Left lung (tissue), 14 donors: ENCODE measurements at regions of chr10 and their contacts with region 1.

Region 1: GRCh38 chr10:89563861-89564478 is 28.6 kb upstream of the SLC16A12 start:
- DNase-seq: peak in 2 of 4 donors; percentile 42 to 48
- ATAC-seq: peak; percentile 73
- H3K4me3 ChIP-seq: no peak overlapping the region
- H3K27ac ChIP-seq: no peak overlapping the region
- H3K4me1 ChIP-seq: no peaks in the 10 kb centered on the region
- H3K27me3 ChIP-seq: no peaks in the 10 kb centered on the region
- CTCF ChIP-seq: peak; percentile 56 to 69

Region 2: DNA sequence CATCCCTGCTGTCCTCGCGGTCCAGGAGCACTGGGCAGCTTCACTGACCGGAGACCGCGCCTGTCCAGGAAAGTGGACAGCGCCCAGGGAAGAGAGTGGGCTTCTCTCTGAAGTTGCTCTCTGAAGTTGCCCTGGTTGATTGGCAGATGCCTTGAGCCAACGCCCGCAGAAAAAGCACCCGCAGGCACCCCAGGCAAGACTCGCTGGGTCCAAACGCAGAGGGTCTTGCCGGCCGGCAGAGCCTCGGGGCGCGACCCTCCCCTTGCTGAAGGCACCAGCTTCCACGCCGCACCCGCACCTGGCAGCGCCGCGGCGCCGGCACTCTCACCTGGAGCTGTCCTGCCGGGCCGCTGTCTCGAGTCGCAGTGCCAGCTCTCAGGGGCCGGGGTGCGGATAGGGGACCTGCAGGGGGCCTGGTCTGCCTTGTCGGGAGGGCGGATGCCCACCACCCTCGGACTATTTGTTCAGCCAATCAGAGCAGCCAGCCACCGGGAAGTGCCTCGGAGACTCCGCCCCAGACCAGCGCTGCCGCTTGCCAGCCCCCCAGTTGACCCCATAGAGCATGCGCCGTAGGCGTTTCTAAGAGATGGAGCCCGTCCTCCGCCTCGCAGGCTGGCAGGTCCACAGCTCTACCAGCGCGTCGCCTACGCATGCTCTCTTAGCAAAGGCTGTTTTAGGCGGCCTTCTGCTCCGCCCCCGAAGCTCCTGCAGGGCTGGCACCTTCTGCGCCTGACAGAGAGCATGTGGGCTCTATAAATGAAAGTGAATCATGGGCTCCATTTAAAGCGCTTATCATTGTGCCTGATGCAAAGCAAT is 312.4 kb before region 1 on chr10 and contains the start of gene LIPA:
- intact Hi-C with region 1: loop called in 1 of 2 experiments (anchors 10 kb)
- DNase-seq: peak; percentile 93 to 98 (median 96)
- ATAC-seq: peak; percentile 99
- H3K4me3 ChIP-seq: peak within 1 kb of the TSS; percentile 89 to 96
- H3K27ac ChIP-seq: peak within 1 kb of the TSS; percentile 57 to 81
- H3K4me1 ChIP-seq: peaks cover 6 to 36% of the 10 kb centered on the region in 2 donors
- H3K27me3 ChIP-seq: no peaks in the 10 kb centered on the region
- CTCF ChIP-seq: no peak
- polyA plus RNA-seq, gene LIPA: 58.0 to 65.4 (median 61.8) TPM

Region 3: DNA sequence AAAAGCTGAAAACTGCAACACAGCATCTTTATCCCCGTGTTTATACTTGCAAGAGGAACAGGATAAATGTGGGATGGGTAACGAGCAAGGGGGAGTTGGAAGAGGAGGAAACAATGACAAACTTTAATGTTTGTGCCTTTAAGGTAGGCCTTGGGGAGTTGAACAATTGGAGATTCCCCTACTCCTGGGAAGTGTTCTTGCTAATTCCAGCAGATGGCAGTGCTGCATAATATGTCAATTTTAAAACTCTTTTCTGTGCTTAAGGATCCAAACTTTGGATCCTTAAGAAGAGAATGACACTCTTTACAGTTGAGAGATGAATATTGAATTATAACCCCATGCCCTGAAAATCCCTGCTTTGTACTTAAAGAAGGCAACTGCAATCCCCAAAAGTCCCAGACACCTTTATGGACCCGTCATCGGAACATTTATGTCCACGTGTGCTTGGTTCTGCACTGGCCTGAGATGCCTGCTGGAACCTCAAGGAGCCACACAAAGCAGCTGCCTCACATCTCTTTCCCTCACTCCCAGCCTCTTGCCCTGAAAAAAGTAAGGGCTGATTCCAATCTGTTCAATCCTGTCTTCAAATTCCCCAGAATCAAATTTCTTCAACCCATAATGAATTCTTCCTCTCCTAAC is 137.6 kb before region 1 on chr10:
- intact Hi-C with region 1: loop called in 1 of 2 experiments (anchors 5 kb)
- DNase-seq: peak in 2 of 4 donors; percentile 54 to 69
- ATAC-seq: peak; percentile 89
- H3K4me3 ChIP-seq: no peak overlapping the region
- H3K27ac ChIP-seq: no peak overlapping the region
- H3K4me1 ChIP-seq: no peaks in the 10 kb centered on the region
- H3K27me3 ChIP-seq: no peaks in the 10 kb centered on the region
- CTCF ChIP-seq: peak; percentile 73 to 80

Region 4: DNA sequence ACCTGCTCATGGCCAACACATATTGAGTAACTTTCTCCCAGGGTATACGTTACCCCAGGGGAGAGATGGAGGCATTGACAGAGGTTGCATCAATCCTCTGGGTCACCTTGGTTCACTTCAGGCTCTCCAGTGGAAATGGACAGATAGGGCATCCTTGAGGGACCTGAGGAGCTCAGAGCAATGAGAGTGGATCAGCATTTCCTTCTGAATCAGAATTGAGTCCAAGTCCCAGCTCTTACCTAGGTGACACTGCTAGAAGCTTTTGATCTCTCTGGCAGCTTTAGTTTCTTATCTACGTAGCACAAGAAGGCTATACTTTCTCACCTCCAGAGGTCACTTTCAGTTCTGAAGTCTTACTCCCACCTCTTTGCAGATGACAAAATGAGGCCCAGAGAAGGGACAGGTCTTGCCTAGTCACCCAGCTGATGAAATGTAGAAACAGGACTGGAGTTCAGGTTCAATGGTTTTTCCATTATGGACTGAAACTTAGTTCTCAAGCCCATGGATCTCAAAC is 45.9 kb after region 1 on chr10:
- intact Hi-C with region 1: no loop called
- DNase-seq: no peak
- ATAC-seq: no peak
- H3K4me3 ChIP-seq: no peak overlapping the region
- H3K27ac ChIP-seq: no peak overlapping the region
- H3K4me1 ChIP-seq: no peaks in the 10 kb centered on the region
- H3K27me3 ChIP-seq: no peaks in the 10 kb centered on the region
- CTCF ChIP-seq: no peak